PC-3 (cell line): ENCODE measurements at regions of chr5 and their contacts with region 1.

Region 1: GRCh38 chr5:59799668-59800346 is 93.7 kb downstream of the PDE4D start:
- DNase-seq: peak; percentile 72
- ATAC-seq: peak; percentile 46
- H3K4me3 ChIP-seq: peak overlapping the region; percentile 56
- H3K27ac ChIP-seq: peak overlapping the region; percentile 99
- H3K4me1 ChIP-seq: peaks cover 28% of the 10 kb centered on the region
- H3K27me3 ChIP-seq: no peaks in the 10 kb centered on the region
- CTCF ChIP-seq: peak; percentile 74

Region 2: GRCh38 chr5:58886315-58887207 is 913.2 kb before region 1 on chr5:
- CTCF ChIA-PET with region 1: no interaction called
- POLR2A ChIA-PET with region 1: no interaction called
- intact Hi-C with region 1: loop called (anchors 5 kb)
- DNase-seq: peak; percentile 60
- ATAC-seq: peak; percentile 67
- H3K4me3 ChIP-seq: no peak overlapping the region
- H3K27ac ChIP-seq: no peak overlapping the region
- H3K4me1 ChIP-seq: peaks cover 8% of the 10 kb centered on the region
- H3K27me3 ChIP-seq: no peaks in the 10 kb centered on the region
- CTCF ChIP-seq: peak; percentile 82

Region 3: DNA sequence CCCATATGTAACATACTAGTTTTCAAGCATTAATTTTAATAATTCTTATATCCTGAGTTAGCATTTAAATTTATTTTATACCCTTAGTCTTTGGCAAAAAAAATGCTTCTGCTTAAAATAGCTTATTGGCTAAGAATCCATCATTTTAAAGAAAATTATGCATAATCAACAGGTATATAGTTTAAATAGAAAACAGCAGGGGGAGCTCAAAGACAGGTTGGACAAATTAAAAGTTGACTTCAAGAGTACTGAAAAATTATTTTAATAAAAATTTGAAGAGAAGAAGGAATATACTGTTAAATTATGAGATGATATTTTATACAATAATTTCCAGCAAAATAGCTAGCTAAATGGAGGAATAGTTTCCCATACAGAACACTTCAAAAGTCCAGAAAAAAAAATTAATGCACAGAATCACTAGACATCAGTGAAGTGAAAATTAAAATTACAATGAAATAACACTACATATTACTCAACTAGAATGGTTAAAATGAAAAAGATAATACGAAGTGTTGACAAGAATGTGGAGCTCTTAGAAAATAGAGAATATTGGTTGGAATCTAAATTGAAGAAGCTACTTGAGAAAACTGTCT is 293.4 kb before region 1 on chr5:
- CTCF ChIA-PET with region 1: interaction called, 5 read pairs
- POLR2A ChIA-PET with region 1: no interaction called
- intact Hi-C with region 1: loop called (anchors 1 kb)
- DNase-seq: peak; percentile 44
- ATAC-seq: peak; percentile 31; the same call in 1 of the 2 replicates
- H3K4me3 ChIP-seq: no peak overlapping the region
- H3K27ac ChIP-seq: no peak overlapping the region
- H3K4me1 ChIP-seq: no peaks in the 10 kb centered on the region
- H3K27me3 ChIP-seq: no peaks in the 10 kb centered on the region
- CTCF ChIP-seq: peak; percentile 61

Region 4: DNA sequence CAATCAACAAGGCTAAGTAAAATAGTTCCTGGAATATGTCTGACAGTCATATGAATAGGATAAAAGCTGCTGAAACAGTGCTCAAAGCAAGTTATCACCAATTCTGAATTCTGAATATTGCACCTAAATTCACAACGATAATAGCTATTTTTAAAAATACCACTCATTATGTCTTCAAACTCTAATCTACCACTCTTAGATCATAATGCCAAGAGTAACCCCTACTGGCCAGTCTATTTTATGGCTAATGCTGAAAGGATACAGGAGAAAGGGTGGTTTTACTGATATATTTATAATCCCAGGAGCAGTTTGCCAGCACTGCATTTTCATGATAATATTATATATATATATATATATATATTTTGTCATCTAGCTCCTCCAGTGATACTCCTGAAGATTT is 139.1 kb before region 1 on chr5:
- CTCF ChIA-PET with region 1: no interaction called
- POLR2A ChIA-PET with region 1: no interaction called
- intact Hi-C with region 1: loop called (anchors 1 kb)
- DNase-seq: peak; percentile 53
- ATAC-seq: peak; percentile 45; the same call in 1 of the 2 replicates
- H3K4me3 ChIP-seq: no peak overlapping the region
- H3K27ac ChIP-seq: no peak overlapping the region
- H3K4me1 ChIP-seq: peaks cover 23% of the 10 kb centered on the region
- H3K27me3 ChIP-seq: no peaks in the 10 kb centered on the region
- CTCF ChIP-seq: peak; percentile 55

Region 5: GRCh38 chr5:59724482-59725391 is 75.1 kb before region 1 on chr5:
- CTCF ChIA-PET with region 1: no interaction called
- POLR2A ChIA-PET with region 1: no interaction called
- intact Hi-C with region 1: loop called (anchors 1 kb)
- DNase-seq: peak; percentile 58
- ATAC-seq: peak; percentile 61
- H3K4me3 ChIP-seq: no peak overlapping the region
- H3K27ac ChIP-seq: no peak overlapping the region
- H3K4me1 ChIP-seq: peaks cover 15% of the 10 kb centered on the region
- H3K27me3 ChIP-seq: no peaks in the 10 kb centered on the region
- CTCF ChIP-seq: peak; percentile 70

Region 6: DNA sequence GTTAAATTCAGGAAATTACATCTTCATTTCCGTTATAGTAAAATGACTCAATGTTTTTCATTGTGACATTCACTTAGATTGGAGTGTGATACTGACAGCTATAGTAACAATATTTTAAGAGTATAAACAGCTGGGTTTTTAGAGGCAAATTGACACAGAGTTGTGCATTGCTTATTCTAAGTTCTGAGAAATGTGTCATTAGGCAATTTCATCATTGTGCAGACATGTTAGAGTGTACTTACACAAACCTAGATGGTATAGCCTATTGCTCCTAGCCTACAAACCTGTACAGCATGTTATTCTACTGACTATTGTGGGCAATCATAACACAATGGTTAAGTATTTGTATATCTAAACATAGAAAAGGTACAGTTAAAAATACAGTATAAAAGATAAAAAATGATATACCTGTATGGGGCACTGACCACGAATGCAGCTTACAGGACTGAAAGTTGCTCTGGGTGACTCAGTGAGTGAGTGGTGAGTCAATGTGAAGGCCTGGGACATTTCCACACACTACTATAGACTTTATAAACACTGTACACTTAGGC is 38.9 kb before region 1 on chr5:
- CTCF ChIA-PET with region 1: no interaction called
- POLR2A ChIA-PET with region 1: no interaction called
- intact Hi-C with region 1: loop called (anchors 1 kb)
- DNase-seq: peak; percentile 60
- ATAC-seq: peak; percentile 80
- H3K4me3 ChIP-seq: 0 out of 2 replicates have a peak overlapping the region, but pooled peaks have one; percentile 18
- H3K27ac ChIP-seq: peak overlapping the region; percentile 98
- H3K4me1 ChIP-seq: peaks cover 53% of the 10 kb centered on the region
- H3K27me3 ChIP-seq: no peaks in the 10 kb centered on the region
- CTCF ChIP-seq: no peak